Activated CD8-positive, alpha-beta T cell treated with anti-CD3 and anti-CD28 coated beads for 36 hours (primary cell): ENCODE measurements at regions of chrX and their contacts with region 1.

Region 1: DNA sequence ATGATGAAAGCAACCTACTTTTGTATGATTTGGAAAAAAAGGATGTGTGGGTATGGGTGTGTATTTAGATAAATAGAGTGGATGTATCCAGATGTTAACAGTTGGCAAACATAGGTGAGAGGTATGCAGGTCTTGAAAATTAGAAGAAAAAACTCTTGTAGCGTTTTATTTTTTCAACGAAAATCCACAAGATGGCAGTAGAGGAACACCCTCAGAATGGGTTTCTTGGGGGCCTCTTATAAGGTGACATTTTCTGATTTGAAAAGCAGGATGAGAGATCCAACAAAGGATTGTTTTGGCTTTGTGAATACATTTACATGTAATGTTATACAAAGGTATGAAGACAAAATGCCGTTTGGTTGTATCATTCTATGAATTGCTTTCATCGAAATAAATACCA is 68.3 kb downstream of the FMR1NB start:
- DNase-seq: no peak
- ATAC-seq: no peak
- H3K4me3 Mint-ChIP-seq: no peak overlapping the region
- H3K27ac Mint-ChIP-seq: no peak overlapping the region
- H3K4me1 Mint-ChIP-seq: no peaks in the 10 kb centered on the region
- H3K27me3 Mint-ChIP-seq: no peaks in the 10 kb centered on the region
- CTCF ChIP-seq: peak; percentile 48

Region 2: GRCh38 chrX:147859666-147860065 is 189.8 kb before region 1 on chrX:
- CTCF ChIA-PET with region 1: no interaction called
- POLR2A ChIA-PET with region 1: no interaction called
- intact Hi-C with region 1: no loop called
- DNase-seq: no peak
- ATAC-seq: no peak
- H3K4me3 Mint-ChIP-seq: no peak overlapping the region
- H3K27ac Mint-ChIP-seq: no peak overlapping the region
- H3K4me1 Mint-ChIP-seq: no peaks in the 10 kb centered on the region
- H3K27me3 Mint-ChIP-seq: no peaks in the 10 kb centered on the region
- CTCF ChIP-seq: no peak

Region 3: GRCh38 chrX:148070504-148070877 is 21.1 kb after region 1 on chrX:
- CTCF ChIA-PET with region 1: no interaction called
- POLR2A ChIA-PET with region 1: no interaction called
- intact Hi-C with region 1: no loop called
- DNase-seq: no peak
- ATAC-seq: no peak
- H3K4me3 Mint-ChIP-seq: no peak overlapping the region
- H3K27ac Mint-ChIP-seq: no peak overlapping the region
- H3K4me1 Mint-ChIP-seq: no peaks in the 10 kb centered on the region
- H3K27me3 Mint-ChIP-seq: peaks cover 6% of the 10 kb centered on the region
- CTCF ChIP-seq: no peak

Region 4: GRCh38 chrX:148146121-148146520 is 96.7 kb after region 1 on chrX:
- CTCF ChIA-PET with region 1: no interaction called
- POLR2A ChIA-PET with region 1: no interaction called
- intact Hi-C with region 1: no loop called
- DNase-seq: no peak
- ATAC-seq: no peak
- H3K4me3 Mint-ChIP-seq: no peak overlapping the region
- H3K27ac Mint-ChIP-seq: no peak overlapping the region
- H3K4me1 Mint-ChIP-seq: no peaks in the 10 kb centered on the region
- H3K27me3 Mint-ChIP-seq: no peaks in the 10 kb centered on the region
- CTCF ChIP-seq: no peak

Region 5: DNA sequence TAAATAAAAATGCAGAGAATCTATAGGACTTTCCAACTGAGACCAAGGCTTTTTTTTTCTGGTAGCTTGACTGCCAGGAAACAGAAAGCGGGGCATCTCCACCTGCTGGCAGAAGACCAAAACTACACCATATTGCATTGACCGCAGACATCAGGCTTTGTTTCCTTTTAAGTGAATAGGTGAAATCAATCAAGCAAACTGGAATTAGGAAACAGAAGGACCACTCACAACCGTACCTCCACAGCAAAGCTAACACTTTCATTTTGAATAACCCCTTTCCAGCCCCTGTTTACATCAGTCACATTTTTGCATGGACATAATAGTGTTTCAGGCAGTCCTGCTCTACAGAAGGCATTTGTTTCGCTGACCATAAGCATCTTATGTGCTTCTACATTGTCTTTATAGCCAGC is 1237.5 kb after region 1 on chrX:
- CTCF ChIA-PET with region 1: interaction called, 5 read pairs
- POLR2A ChIA-PET with region 1: no interaction called
- intact Hi-C with region 1: loop called (anchors 10 kb)
- DNase-seq: peak; percentile 56
- ATAC-seq: peak; percentile 60
- H3K4me3 Mint-ChIP-seq: no peak overlapping the region
- H3K27ac Mint-ChIP-seq: no peak overlapping the region
- H3K4me1 Mint-ChIP-seq: peaks cover 18% of the 10 kb centered on the region
- H3K27me3 Mint-ChIP-seq: peaks cover 1% of the 10 kb centered on the region
- CTCF ChIP-seq: peak; percentile 53

Region 6: DNA sequence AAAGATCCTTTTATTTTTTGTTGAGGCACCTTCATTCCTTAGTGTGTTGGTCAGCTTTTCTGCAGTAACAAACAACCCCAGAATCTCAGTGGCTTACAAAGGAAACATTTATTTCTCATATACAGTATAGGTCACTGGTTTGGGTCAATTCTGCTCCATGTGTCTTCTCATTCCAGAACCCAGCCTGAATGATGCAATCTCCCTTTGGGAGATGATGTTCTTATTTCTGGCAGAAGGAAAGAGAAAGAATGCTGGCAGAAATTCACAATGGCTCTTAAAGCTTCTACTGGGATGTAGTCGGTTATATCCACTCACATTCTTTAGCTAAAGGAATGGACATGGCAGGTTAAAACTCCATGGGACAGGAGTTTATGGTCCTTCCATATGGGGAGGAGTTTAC is 1413.4 kb after region 1 on chrX:
- CTCF ChIA-PET with region 1: no interaction called
- POLR2A ChIA-PET with region 1: no interaction called
- intact Hi-C with region 1: loop called (anchors 10 kb)
- DNase-seq: no peak
- ATAC-seq: no peak
- H3K4me3 Mint-ChIP-seq: no peak overlapping the region
- H3K27ac Mint-ChIP-seq: no peak overlapping the region
- H3K4me1 Mint-ChIP-seq: no peaks in the 10 kb centered on the region
- H3K27me3 Mint-ChIP-seq: peaks cover 11% of the 10 kb centered on the region
- CTCF ChIP-seq: no peak